IMR-90 (cell line): ENCODE measurements at regions of chr12 and their contacts with region 1.

Region 1: DNA sequence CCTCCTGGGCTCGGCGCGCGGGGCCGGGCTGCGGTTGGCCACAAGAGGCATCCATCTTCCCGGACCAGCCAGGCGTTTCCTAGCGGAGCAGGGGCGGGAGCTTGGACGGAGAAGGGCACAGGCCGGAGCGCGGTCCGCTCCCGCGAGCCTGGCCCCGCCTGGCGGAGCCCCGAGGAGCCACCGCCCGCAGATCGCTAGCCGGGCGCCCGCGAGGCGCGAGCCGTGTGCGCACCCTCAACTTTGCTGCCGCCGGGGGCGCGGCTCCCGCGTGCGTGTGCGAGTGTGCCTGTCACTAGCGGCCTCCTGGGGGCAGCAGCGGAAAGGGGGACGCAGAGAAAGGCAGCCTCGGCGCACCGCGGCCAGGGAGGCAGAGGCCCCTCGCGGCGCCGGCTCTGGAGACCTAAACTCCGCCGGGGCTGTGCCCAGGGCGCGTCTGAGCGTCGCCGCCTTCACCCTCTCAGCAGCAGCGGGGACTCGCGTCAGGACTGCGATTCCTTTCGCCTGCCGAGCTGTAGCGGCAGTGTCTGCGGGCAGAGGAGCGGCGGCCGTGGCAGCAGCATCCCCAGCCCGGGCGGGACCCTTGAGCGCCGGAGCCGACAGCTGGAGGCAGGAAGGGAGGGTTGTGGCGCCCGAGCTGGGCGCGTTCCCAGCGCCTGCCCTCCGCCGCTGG is 644 bp upstream of the SRGAP1 start:
- DNase-seq: peak; percentile 96
- ATAC-seq: peak; percentile 90
- H3K4me3 ChIP-seq: peak overlapping the region; percentile 99
- H3K27ac ChIP-seq: peak overlapping the region; percentile 99
- H3K4me1 ChIP-seq: peaks cover 7% of the 10 kb centered on the region
- H3K27me3 ChIP-seq: no peaks in the 10 kb centered on the region
- CTCF ChIP-seq: peak; percentile 99
- POLR2A ChIP-seq: no peak; the same call in 1 of the 2 replicates
- RAD21 ChIP-seq: peak; percentile 98

Region 2: DNA sequence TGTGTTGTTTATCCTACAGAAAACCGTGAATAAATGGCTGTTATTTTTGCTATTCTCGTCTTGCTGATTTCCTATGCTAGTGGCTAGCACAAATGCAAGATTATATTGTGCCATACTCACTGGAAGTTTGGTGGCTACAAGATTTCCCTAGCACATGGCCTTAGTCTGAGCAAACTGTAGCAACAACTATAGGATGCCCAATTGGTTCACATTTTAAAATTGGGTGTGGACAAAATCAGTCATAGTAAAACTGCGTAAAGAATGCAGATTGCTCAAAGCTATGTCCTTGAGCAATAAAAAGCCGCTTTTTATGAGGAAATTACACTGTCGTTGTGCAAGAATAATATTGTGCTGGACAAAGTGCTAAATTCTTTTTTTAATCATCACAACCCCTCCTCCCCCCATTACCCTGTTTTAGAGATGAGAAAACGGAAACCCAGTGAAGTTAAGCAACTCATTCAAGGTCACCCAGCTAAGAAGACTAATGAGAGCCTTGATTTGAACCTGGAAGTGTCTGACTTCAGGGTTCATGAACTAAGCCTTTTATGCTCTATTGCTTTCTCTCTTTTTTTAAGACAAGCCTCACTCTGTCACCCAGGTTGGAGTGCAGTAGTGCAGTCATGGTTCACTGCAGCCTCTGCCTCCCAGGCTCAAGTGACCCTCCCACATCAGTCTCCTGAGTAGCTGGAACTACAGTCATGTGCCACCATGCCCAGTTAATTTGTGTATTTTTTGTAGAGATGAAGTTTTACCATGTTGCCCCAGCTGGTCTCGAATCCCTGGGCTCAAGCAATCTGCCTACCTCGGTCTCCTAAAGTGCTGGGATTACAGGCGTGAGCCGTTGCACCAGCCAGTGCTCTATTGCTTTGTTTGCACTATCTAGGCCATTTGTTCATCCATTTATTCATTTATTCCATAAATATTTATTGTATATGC is 74.3 kb after region 1 on chr12:
- CTCF ChIA-PET with region 1: no interaction called
- POLR2A ChIA-PET with region 1: no interaction called
- dilution Hi-C with region 1: no loop called
- in situ Hi-C with region 1: no loop called
- intact Hi-C with region 1: loop called (anchors 1 kb)
- DNase-seq: peak; percentile 96
- ATAC-seq: peak; percentile 56
- H3K4me3 ChIP-seq: no peak overlapping the region
- H3K27ac ChIP-seq: peak overlapping the region; percentile 100
- H3K4me1 ChIP-seq: peaks cover 25% of the 10 kb centered on the region
- H3K27me3 ChIP-seq: no peaks in the 10 kb centered on the region
- CTCF ChIP-seq: no peak
- POLR2A ChIP-seq: 0 out of 2 replicates have a peak, but pooled peaks have one; percentile 56
- RAD21 ChIP-seq: peak; percentile 4; the same call in 1 of the 2 replicates

Region 3: GRCh38 chr12:63994704-63995103 is 150.8 kb after region 1 on chr12:
- CTCF ChIA-PET with region 1: interaction called, 3 read pairs
- POLR2A ChIA-PET with region 1: no interaction called
- dilution Hi-C with region 1: no loop called
- in situ Hi-C with region 1: loop called (anchors 10 kb)
- intact Hi-C with region 1: no loop called
- DNase-seq: peak; percentile 61
- ATAC-seq: peak; percentile 27; the same call in 1 of the 2 replicates
- H3K4me3 ChIP-seq: no peak overlapping the region
- H3K27ac ChIP-seq: no peak overlapping the region; the same call in 1 of the 2 replicates
- H3K4me1 ChIP-seq: peaks cover 25% of the 10 kb centered on the region
- H3K27me3 ChIP-seq: no peaks in the 10 kb centered on the region
- CTCF ChIP-seq: no peak
- POLR2A ChIP-seq: no peak
- RAD21 ChIP-seq: no peak

Region 4: GRCh38 chr12:64010069-64010699 is 166.3 kb after region 1 on chr12:
- CTCF ChIA-PET with region 1: interaction called, 4 read pairs
- POLR2A ChIA-PET with region 1: no interaction called
- dilution Hi-C with region 1: no loop called
- in situ Hi-C with region 1: no loop called
- intact Hi-C with region 1: loop called (anchors 5 kb)
- DNase-seq: peak; percentile 95
- ATAC-seq: peak; percentile 83
- H3K4me3 ChIP-seq: no peak overlapping the region
- H3K27ac ChIP-seq: peak overlapping the region; percentile 98
- H3K4me1 ChIP-seq: peaks cover 21% of the 10 kb centered on the region
- H3K27me3 ChIP-seq: no peaks in the 10 kb centered on the region
- CTCF ChIP-seq: 0 out of 2 replicates have a peak, but pooled peaks have one; percentile 8
- POLR2A ChIP-seq: no peak
- RAD21 ChIP-seq: peak; percentile 23

Region 5: GRCh38 chr12:64029013-64029857 is 185.4 kb after region 1 on chr12:
- CTCF ChIA-PET with region 1: no interaction called
- POLR2A ChIA-PET with region 1: no interaction called
- dilution Hi-C with region 1: no loop called
- in situ Hi-C with region 1: no loop called
- intact Hi-C with region 1: no loop called
- DNase-seq: peak; percentile 52
- ATAC-seq: peak; percentile 78
- H3K4me3 ChIP-seq: no peak overlapping the region
- H3K27ac ChIP-seq: peak overlapping the region; percentile 35; the same call in 1 of the 2 replicates
- H3K4me1 ChIP-seq: peaks cover 16% of the 10 kb centered on the region
- H3K27me3 ChIP-seq: no peaks in the 10 kb centered on the region
- CTCF ChIP-seq: no peak
- POLR2A ChIP-seq: no peak
- RAD21 ChIP-seq: no peak

Region 6: DNA sequence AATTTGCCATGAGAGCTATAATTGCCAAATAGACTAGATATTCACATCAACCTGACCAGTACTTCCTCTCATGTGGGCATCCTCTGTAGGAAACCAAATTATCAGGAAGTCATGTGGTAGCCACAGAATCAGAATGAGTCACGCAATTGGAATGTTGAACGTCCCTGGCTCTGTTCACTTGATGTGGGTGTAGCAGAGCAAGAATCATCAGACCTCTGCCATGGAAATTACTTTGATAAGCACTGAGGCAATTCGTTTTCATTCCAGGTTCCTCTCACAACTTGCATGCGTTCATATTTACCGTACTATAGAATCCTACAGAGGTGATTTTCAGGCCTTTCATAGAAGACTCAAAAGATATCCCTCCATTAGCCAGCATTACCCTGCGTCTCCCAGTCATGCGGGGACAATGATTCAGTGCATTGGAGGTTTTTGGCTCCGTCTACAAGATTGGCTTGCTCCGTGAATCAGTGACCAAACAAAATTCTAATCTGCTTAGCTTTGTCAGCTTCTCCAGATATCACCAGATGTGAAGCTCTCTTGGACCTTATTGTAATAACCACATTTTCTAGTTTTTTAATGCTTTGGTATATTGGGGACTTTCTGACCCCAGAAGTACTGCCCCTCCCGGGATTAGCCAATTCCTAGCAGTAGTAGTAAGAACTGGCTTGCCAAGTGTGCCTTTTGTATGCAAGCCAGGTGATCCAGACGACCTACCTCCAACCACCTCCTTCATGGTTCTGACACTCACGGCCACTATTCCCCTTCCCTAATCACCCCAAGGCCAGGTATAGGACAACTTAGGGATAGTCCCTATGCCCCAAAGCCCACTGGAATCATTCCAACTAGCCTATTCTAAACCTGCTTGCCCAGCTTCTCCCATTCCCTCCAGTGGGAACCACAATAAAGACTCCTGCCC is 244.8 kb after region 1 on chr12:
- CTCF ChIA-PET with region 1: interaction called, 7 read pairs
- POLR2A ChIA-PET with region 1: interaction called, 6 read pairs
- dilution Hi-C with region 1: no loop called
- in situ Hi-C with region 1: no loop called
- intact Hi-C with region 1: loop called (anchors 5 kb)
- DNase-seq: peak; percentile 97
- ATAC-seq: peak; percentile 84
- H3K4me3 ChIP-seq: no peak overlapping the region; the same call in 1 of the 2 replicates
- H3K27ac ChIP-seq: peak overlapping the region; percentile 95
- H3K4me1 ChIP-seq: peaks cover 19% of the 10 kb centered on the region
- H3K27me3 ChIP-seq: no peaks in the 10 kb centered on the region
- CTCF ChIP-seq: no peak
- POLR2A ChIP-seq: no peak
- RAD21 ChIP-seq: no peak

Region 7: DNA sequence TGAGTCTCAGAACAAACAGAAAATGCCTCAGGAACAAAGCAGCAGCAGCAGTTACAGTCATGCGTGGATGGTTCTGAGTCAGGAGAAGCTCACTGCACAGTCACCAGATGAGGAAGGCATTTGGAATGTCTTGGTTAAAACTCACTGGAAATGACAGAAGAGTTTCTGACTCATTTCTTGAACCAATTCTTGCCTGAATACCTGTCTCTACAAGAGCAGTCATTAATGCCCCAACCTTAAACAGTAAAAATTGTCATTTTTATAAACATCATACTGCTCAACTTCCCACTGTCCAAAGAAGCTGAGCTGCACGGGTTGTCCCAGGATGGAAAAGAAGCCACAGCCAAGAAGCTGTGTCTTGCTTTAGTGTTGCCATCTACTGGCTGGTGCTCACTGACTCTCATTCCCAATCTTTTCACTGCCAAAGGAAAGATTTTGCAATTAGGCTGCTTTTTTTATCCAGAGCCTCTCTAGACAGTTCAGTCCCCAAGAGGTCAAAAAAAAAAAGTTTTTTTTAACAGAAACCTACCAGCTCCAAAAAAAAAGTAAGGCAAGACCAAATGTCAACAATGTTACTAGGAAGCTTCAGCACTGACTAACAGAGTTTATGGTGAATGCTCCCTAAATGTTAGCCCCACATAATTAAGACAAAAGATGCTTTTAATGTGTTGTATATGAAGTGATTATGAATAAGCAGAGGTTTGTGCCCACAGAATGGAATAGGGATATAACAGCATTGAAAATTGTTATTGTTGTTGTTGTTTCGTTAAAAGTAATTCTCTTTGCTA is 337.8 kb after region 1 on chr12:
- CTCF ChIA-PET with region 1: interaction called, 5 read pairs
- POLR2A ChIA-PET with region 1: interaction called, 3 read pairs
- dilution Hi-C with region 1: no loop called
- in situ Hi-C with region 1: no loop called
- intact Hi-C with region 1: loop called (anchors 1 kb)
- DNase-seq: peak; percentile 99
- ATAC-seq: peak; percentile 86
- H3K4me3 ChIP-seq: peak overlapping the region; percentile 10; the same call in 1 of the 2 replicates
- H3K27ac ChIP-seq: peak overlapping the region; percentile 98
- H3K4me1 ChIP-seq: peaks cover 24% of the 10 kb centered on the region
- H3K27me3 ChIP-seq: no peaks in the 10 kb centered on the region
- CTCF ChIP-seq: peak; percentile 61
- POLR2A ChIP-seq: peak; percentile 63; the same call in 1 of the 2 replicates
- RAD21 ChIP-seq: peak; percentile 63

Region 8: GRCh38 chr12:64256166-64256800 is 412.4 kb after region 1 on chr12:
- CTCF ChIA-PET with region 1: interaction called, 8 read pairs
- POLR2A ChIA-PET with region 1: no interaction called
- dilution Hi-C with region 1: loop called (anchors 25 kb)
- in situ Hi-C with region 1: loop called (anchors 5 kb)
- intact Hi-C with region 1: loop called (anchors 1 kb)
- DNase-seq: peak; percentile 67
- ATAC-seq: peak; percentile 66
- H3K4me3 ChIP-seq: no peak overlapping the region
- H3K27ac ChIP-seq: no peak overlapping the region
- H3K4me1 ChIP-seq: peaks cover 3% of the 10 kb centered on the region; the same call in 1 of the 2 replicates
- H3K27me3 ChIP-seq: no peaks in the 10 kb centered on the region
- CTCF ChIP-seq: peak; percentile 89
- POLR2A ChIP-seq: no peak
- RAD21 ChIP-seq: peak; percentile 95